Right ventricle myocardium superior (tissue), 1 donor: ENCODE measurements at regions of chr22 and their contacts with region 1.

Region 1: GRCh38 chr22:45268958-45269844 is 15.5 kb upstream of the UPK3A start:
- DNase-seq: peak; percentile 92
- ATAC-seq: peak; percentile 84

Region 2: DNA sequence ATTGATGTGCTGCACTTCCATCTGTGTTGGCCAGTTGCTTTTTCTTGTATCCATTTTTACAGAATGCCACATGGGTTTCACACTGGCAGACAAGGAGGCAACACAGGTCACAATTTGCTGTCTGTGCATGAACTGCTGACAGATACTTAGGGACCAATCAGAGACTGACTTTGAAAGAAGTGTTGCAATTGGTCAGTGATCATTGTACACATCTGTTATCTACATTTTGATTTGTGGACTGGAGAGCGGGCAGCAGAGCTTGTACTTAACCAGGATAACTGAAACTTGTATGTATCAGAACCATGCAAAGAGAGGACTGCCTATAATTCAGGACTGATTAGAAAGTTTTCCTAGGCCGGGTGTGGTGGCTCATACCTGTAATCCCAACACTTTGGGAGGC is 545.4 kb before region 1 on chr22:
- intact Hi-C with region 1: no loop called
- DNase-seq: no peak
- ATAC-seq: no peak

Region 3: DNA sequence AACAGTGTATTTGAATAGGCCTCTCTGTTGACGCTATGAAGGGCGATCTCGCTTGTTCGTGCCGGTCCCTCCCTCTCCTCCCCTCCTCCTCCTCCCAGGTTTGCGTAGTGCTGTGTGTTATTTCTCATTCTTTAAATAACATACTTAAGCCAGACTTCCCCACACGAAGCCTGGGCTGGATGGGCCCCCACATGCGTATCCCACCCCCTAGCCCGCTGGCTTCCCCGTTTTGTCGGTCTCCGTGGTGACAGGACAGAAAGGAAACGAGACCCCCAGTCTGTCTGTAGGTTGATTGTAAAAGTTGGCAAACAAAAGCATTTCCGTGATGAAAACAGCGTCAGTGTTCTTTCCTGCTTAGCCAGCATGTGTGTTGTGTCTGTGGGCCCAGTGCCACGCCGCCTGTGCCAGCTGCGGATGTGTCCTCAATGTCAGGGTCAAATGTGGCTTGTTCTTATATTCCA is 67.8 kb after region 1 on chr22:
- intact Hi-C with region 1: loop called (anchors 10 kb)
- DNase-seq: peak; percentile 93
- ATAC-seq: peak; percentile 53

Region 4: GRCh38 chr22:45435544-45436139 is 166.4 kb after region 1 on chr22:
- intact Hi-C with region 1: loop called (anchors 2 kb)
- DNase-seq: peak; percentile 92
- ATAC-seq: peak; percentile 96

Region 5: GRCh38 chr22:45553351-45554039 is 284.3 kb after region 1 on chr22:
- intact Hi-C with region 1: loop called (anchors 5 kb)
- DNase-seq: peak; percentile 85
- ATAC-seq: peak; percentile 69